ENCODE measurements at regions of chr7 and their contacts with region 1.

Region 1: GRCh38 chr7:105589356-105590077 is 8.2 kb upstream of the EFCAB10 start:
- DNase-seq: peak; percentile 79
- ATAC-seq: peak; percentile 97
- H3K4me3 Mint-ChIP-seq: no peak overlapping the region
- H3K27ac Mint-ChIP-seq: no peak overlapping the region
- H3K4me1 Mint-ChIP-seq: peaks cover 9% of the 10 kb centered on the region
- H3K27me3 Mint-ChIP-seq: no peaks in the 10 kb centered on the region
- CTCF ChIP-seq: peak; percentile 74

Region 2: GRCh38 chr7:105600720-105601550 is 11.4 kb after region 1 on chr7:
- CTCF ChIA-PET with region 1: interaction called, 10 read pairs
- POLR2A ChIA-PET with region 1: no interaction called
- intact Hi-C with region 1: no loop called
- DNase-seq: no peak
- ATAC-seq: no peak
- H3K4me3 Mint-ChIP-seq: no peak overlapping the region
- H3K27ac Mint-ChIP-seq: no peak overlapping the region
- H3K4me1 Mint-ChIP-seq: no peaks in the 10 kb centered on the region
- H3K27me3 Mint-ChIP-seq: peaks cover 6% of the 10 kb centered on the region
- CTCF ChIP-seq: no peak

Measured in activated CD8-positive, alpha-beta T cell treated with anti-CD3 and anti-CD28 coated beads for 36 hours (primary cell).